GM10248 (cell line): ENCODE measurements at regions of chr10 and their contacts with region 1.

Region 1: DNA sequence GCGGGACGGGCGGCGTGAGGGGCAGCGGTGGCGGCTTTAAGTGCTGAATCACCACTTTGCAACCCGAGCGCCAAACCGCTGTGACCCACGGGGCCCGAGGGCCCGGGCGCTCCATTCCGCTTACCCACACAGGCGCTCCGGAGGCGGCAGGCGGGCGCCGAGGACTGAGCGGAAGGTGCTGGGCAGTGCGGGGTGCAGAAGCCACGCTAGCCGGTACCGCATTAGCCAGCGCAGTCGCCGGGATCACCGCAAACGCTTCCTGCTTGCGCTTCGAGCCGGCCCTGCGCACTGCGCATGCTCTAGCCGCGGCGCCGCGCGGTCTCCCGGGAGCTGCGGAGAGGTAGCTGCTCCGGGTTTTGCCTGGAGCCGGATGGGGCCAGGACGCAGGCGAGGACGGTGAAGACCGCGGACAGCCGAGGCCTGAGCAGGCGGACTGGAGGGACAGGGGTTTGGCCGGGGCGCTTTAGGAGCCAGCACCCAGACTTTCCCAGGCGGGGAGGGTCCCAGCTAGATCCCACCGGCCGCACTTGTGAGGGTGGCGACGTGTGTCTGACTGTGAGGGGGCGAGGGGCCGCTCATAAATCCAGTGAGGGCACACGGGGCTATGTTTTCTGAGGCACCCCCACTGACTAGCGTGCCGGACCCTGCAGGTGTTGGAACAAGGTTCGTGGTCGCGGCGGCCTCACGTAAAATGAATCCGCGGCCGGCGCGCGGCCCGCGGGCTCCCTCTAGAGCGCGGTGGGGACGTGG is at the start of gene IDE:
- DNase-seq: peak; percentile 90
- CTCF ChIP-seq: peak; percentile 94

Region 2: GRCh38 chr10:92181575-92181974 is 392.4 kb before region 1 on chr10:
- CTCF ChIA-PET with region 1: no interaction called
- POLR2A ChIA-PET with region 1: no interaction called
- DNase-seq: no peak
- CTCF ChIP-seq: no peak

Region 3: GRCh38 chr10:92517034-92517655 is 56.8 kb before region 1 on chr10:
- CTCF ChIA-PET with region 1: interaction called, 63 read pairs
- POLR2A ChIA-PET with region 1: interaction called, 3 read pairs
- DNase-seq: peak; percentile 70
- CTCF ChIP-seq: peak; percentile 75

Region 4: GRCh38 chr10:92544296-92544695 is 29.7 kb before region 1 on chr10:
- CTCF ChIA-PET with region 1: interaction called, 15 read pairs
- POLR2A ChIA-PET with region 1: no interaction called
- DNase-seq: no peak
- CTCF ChIP-seq: no peak

Region 5: GRCh38 chr10:92592761-92593618 is 19.0 kb after region 1 on chr10 and contains the start of gene KIF11:
- CTCF ChIA-PET with region 1: interaction called, 23 read pairs
- POLR2A ChIA-PET with region 1: interaction called, 3 read pairs
- DNase-seq: peak; percentile 93
- CTCF ChIP-seq: no peak

Region 6: DNA sequence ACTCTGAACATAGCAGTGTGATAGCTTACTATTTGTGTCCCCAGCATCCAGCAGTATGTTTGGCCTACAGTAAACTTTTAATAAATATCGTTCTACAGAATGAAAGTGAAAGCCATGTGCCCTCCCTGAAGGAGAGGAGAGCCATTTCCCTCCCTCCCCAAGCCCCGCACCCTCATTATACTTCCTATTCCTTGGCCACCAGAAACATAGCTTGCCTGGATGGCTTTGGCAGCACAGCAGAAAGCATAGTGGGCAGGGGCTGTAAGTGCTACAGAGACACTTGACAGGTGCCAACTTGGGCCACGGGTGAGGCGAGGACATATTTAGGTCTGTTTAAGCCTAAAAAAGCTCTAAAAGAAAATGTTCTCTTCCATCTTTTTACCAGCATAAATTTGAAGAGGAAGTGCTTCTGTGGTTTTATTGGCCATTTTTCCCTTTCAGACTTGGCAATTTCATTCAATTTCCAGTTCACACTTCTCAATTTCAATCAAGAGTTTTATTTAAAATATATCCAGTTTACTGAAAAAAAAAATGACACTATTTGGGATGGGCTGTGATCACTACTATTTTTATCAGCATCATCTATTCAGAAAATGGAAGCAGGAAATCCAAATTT is 128.4 kb after region 1 on chr10:
- CTCF ChIA-PET with region 1: no interaction called
- POLR2A ChIA-PET with region 1: no interaction called
- DNase-seq: no peak
- CTCF ChIP-seq: no peak